Common myeloid progenitor, CD34-positive (primary cell): ENCODE measurements at regions of chr14 and their contacts with region 1.

Region 1: DNA sequence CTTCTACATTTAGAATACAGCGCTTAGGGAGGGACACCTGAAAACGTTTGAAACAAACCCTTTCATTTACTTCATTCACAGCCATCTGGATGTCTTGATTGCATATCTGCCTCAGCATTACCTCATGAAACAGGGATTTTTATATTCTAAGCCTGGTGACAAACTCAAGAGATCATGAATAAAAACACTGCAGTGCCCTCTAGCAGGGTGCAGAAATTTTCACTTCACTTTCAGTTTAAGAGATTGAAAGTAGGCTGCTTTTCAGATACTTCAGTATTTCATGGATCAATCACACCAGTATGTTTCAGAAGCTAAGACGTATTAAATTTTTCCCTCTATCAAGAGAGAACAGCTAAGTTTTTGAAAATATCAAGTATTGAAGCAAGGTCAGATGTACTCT is 467.8 kb downstream of the MDGA2 start:
- DNase-seq: peak in 2 of 3 donors; percentile 46 to 55
- H3K4me3 ChIP-seq: no peak overlapping the region
- H3K27ac ChIP-seq: peak overlapping the region in 1 of 2 experiments; percentile 6
- H3K4me1 ChIP-seq: peaks cover 0 to 2% (median under 1%) of the 10 kb centered on the region in 4 experiments
- H3K27me3 ChIP-seq: no peaks in the 10 kb centered on the region

Region 2: DNA sequence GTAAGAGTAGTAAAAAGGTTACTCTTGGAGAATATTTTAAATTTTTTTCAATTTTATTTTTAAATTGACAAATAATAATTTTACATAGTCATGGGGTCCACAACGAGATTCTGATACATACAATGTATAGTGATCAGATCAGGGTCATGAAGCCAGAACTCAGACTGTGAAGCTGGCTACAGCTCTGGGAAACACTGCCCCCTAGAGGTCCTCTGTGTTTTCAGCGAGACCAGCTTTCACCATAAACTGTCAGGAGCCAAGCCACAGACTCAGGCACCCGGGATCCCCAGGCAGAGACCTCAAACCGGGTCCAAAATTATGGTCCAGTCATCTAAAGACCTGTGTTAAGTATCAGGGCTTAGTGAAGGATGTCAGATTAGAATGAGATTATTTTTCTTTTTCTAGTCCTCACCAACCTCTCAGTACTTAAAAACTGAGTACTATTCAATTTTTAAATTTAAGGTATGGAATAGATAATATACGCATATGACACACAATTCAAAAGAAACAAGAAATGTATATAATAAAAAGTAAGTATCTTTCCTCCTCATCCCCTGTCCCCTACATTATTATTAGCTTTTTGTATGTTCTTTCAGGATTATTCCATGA is 70.7 kb after region 1 on chr14:
- CTCF ChIA-PET with region 1: interaction called, 10 read pairs
- POLR2A ChIA-PET with region 1: no interaction called
- DNase-seq: peak; percentile 67 to 81 (median 72)
- H3K4me3 ChIP-seq: no peak overlapping the region
- H3K27ac ChIP-seq: no peak overlapping the region
- H3K4me1 ChIP-seq: peaks cover 0 to 5% (median 4%) of the 10 kb centered on the region in 4 experiments
- H3K27me3 ChIP-seq: no peaks in the 10 kb centered on the region